Psoas muscle (tissue), 8 donors: ENCODE measurements at regions of chr7 and their contacts with region 1.

Region 1: DNA sequence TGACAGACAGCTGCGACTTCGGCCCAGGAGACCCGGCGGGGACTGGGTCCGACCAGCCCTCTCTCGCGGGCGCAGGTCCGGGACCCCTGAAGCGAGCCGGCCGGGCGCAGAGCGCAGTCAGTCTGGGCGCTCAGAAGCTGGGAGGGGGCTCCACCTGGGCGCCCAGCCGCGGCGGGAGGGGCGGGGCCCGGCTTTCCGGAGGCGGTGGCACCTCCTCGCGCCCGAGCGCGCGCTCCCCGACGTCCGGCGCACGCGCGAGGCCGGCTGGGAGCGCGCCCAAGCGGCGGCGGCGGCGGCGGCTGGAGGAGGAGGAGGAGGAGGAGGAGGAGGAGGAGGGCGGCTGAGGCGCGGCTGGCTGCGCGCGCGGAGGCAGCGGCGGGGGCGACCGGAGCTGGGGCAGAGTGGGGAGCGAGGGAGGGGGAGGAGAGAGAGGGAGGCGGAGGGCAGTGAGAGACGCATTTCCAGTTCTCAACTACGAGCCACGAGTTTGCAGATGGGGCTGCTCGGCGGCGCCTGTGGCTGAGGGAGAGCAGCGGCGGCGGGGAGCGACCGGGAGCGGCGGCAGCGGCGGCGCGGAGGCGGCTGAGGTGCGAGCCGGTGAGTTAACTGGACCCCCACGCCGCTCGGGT is at the start of gene PALS2:
- DNase-seq: peak; percentile 78 to 89
- ATAC-seq: peak; percentile 88 to 93 (median 90)
- H3K4me3 ChIP-seq: peak within 1 kb of the TSS; percentile 89
- H3K27ac ChIP-seq: peak within 1 kb of the TSS; percentile 97
- H3K4me1 ChIP-seq: peaks cover 24% of the 10 kb centered on the region
- H3K27me3 ChIP-seq: no peaks in the 10 kb centered on the region
- CTCF ChIP-seq: no peak
- total RNA-seq, gene PALS2: 21.5 to 67.4 (median 33.9) TPM

Region 2: DNA sequence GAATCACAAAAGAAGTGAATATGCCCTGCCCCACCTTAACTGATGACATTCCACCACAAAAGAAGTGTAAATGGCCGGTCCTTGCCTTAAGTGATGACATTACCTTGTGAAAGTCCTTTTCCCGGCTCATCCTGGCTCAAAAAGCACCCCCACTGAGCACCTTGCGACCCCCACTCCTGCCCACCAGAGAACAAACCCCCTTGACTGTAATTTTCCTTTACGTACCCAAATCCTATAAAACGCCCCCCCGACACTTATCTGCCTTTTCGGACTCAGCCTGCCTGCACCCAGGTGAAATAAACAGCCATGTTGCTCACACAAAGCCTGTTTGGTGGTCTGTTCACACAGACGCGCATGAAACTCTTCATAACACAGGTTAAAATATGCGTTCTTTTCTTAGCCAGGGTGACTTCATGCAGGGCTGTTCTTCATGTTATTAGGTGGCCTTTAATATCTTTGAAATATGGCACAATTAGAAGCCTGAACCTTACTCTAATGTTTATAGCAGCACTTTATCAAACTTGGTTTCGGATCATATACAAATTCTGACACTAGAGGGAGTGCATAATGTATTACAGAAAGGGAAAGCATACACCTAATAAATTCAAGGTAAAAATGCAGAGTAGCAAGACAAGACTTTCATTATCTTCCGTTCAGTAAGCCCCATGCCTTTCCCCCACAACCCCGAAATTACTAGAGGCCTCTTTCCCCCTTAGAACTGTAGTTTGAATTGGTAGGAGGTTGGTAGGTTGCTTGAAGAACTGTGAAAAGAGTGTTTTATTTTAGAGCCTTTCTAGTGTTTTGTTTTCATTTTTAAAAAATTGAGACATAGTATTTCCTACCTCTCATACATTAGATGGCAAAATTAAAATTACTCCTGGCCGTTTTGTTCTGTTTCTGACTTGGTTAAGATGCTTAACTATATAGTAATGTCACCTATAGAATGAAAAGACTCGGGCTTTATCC is 171.2 kb before region 1 on chr7:
- intact Hi-C with region 1: loop called (anchors 5 to 10 kb)
- DNase-seq: no peak
- ATAC-seq: peak in 3 of 4 donors; percentile 57 to 81 (median 71)
- H3K4me3 ChIP-seq: peak overlapping the region; percentile 58
- H3K27ac ChIP-seq: peak overlapping the region; percentile 41
- H3K4me1 ChIP-seq: no peaks in the 10 kb centered on the region
- H3K27me3 ChIP-seq: no peaks in the 10 kb centered on the region
- CTCF ChIP-seq: peak; percentile 55

Region 3: GRCh38 chr7:24463474-24463873 is 109.6 kb before region 1 on chr7:
- intact Hi-C with region 1: loop called in 1 of 2 experiments (anchors 5 kb)
- DNase-seq: no peak
- ATAC-seq: peak in 3 of 4 donors; percentile 59 to 75 (median 59)
- H3K4me3 ChIP-seq: no peak overlapping the region
- H3K27ac ChIP-seq: peak overlapping the region; percentile 74
- H3K4me1 ChIP-seq: peaks cover 28% of the 10 kb centered on the region
- H3K27me3 ChIP-seq: no peaks in the 10 kb centered on the region
- CTCF ChIP-seq: peak; percentile 13

Region 4: DNA sequence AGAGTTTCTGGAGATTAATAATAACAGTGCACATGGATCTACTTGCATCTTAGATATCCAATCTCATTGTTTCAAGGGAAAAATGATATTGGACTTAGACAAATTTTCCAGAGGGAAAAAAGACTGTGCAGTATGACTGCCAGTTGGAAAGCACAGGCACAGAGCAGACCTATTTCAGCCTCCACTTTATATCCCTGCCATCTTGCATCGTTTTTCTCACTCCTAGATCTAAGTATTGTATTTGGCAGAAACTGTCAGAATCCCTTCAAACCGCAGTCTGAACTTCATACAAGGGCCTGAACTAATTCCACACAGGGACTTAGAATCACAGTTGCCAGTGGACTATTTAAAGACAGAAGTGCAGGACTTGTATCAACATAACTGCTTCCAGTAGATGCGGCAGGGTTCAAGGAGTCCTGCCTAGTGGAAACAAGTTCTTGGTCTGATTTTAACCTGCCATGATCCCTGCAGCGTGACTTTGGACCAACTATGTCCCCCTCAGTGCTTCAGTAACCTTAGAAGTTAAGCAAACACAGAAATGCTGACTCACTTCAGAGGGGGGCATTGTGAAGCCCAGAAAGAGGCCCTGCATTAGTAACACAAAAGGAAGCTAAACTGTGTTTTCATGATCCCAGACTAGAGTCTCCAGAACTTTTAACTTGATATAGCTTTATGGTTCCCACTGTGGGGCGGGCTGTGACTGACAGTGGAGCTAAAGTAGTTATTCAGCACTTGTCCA is 95.5 kb before region 1 on chr7:
- intact Hi-C with region 1: loop called in 1 of 2 experiments (anchors 5 kb)
- DNase-seq: peak in 1 of 2 donors; percentile 20
- ATAC-seq: peak; percentile 56 to 83 (median 82)
- H3K4me3 ChIP-seq: peak overlapping the region; percentile 1
- H3K27ac ChIP-seq: peak overlapping the region; percentile 61
- H3K4me1 ChIP-seq: peaks cover 17% of the 10 kb centered on the region
- H3K27me3 ChIP-seq: no peaks in the 10 kb centered on the region
- CTCF ChIP-seq: no peak

Region 5: GRCh38 chr7:24622646-24623182 is 49.6 kb after region 1 on chr7:
- intact Hi-C with region 1: loop called in 1 of 2 experiments (anchors 1 kb)
- DNase-seq: no peak
- ATAC-seq: no peak
- H3K4me3 ChIP-seq: no peak overlapping the region
- H3K27ac ChIP-seq: no peak overlapping the region
- H3K4me1 ChIP-seq: peaks cover 1% of the 10 kb centered on the region
- H3K27me3 ChIP-seq: no peaks in the 10 kb centered on the region
- CTCF ChIP-seq: no peak

Region 6: GRCh38 chr7:24665564-24666294 is 92.6 kb after region 1 on chr7:
- intact Hi-C with region 1: loop called (anchors 5 kb)
- DNase-seq: no peak
- ATAC-seq: peak in 3 of 4 donors; percentile 68 to 79 (median 68)
- H3K4me3 ChIP-seq: no peak overlapping the region
- H3K27ac ChIP-seq: no peak overlapping the region
- H3K4me1 ChIP-seq: no peaks in the 10 kb centered on the region
- H3K27me3 ChIP-seq: no peaks in the 10 kb centered on the region
- CTCF ChIP-seq: peak; percentile 70